PC-9 (cell line): ENCODE measurements at regions of chr19 and their contacts with region 1.

Region 1: GRCh38 chr19:13430790-13431582 is 75.3 kb downstream of the CACNA1A start:
- DNase-seq: peak in 1 of 2 experiments; percentile 35
- H3K4me3 ChIP-seq: no peak overlapping the region
- H3K27ac ChIP-seq: no peak overlapping the region
- H3K4me1 ChIP-seq: no peaks in the 10 kb centered on the region
- H3K27me3 ChIP-seq: no peaks in the 10 kb centered on the region
- CTCF ChIP-seq: peak; percentile 81

Region 2: DNA sequence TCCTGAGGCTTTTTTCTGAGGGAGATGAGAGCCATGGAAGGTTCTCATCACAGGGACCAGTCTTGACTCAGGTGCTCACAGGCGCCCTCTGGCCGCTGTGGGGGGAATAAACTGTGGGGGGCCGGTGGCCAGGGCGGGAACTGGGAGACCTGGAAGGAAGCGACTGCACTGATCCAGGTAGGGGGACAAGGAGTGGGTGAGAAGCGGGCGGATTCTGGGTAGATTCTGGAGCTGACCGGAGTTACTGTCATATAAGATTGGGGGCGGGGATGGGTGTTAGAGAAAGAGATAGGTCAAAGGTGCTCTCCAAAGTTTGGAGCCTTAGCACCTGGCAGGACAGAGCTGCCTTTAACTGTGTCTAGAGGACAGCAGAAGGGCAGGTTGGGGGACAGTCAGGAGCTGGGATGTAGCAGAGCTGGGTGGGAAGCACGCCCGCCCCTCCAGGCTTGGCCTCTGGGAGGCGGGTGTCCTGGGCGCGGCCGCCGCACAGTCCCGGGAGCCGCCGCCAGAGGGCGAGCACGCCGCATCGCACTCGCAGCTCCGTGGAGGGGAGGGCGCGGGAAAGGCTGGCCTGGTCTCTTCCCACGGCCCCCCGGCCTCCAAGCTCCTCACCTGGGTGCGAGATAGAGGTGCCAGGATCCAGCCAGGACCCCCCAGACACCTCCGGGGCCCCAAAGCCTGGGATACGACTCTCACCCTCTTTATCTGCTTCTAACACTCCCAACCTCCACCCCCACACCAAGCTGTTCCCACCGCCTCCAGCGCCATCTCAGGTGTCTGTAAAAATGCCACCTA is 465.8 kb before region 1 on chr19:
- CTCF ChIA-PET with region 1: no interaction called
- POLR2A ChIA-PET with region 1: no interaction called
- intact Hi-C with region 1: no loop called
- DNase-seq: peak; percentile 63 to 86
- H3K4me3 ChIP-seq: peak overlapping the region; percentile 58
- H3K27ac ChIP-seq: no peak overlapping the region
- H3K4me1 ChIP-seq: no peaks in the 10 kb centered on the region; the same call in 1 of the 2 replicates
- H3K27me3 ChIP-seq: no peaks in the 10 kb centered on the region
- CTCF ChIP-seq: peak; percentile 96

Region 3: DNA sequence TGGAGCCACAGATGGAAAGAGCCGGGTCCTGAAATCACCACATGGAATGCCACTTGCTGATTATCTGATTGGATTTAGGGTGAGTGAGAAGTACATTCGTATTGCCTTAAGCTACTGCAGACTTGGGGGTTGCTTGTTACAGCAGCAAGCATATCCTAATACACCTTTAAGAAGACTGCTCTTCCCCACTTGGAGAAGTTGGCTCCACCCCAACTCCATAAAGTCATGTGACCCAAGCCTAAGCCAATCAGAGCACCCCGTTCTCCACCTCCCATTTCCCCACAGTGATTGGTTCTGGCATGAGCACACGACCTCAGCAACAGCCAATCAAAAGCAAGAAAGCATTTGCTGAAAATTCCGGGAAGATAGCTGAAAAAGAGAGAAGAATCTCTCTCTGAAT is 52.2 kb after region 1 on chr19:
- CTCF ChIA-PET with region 1: no interaction called
- POLR2A ChIA-PET with region 1: interaction called, 26 read pairs
- intact Hi-C with region 1: no loop called
- DNase-seq: no peak
- H3K4me3 ChIP-seq: no peak overlapping the region
- H3K27ac ChIP-seq: no peak overlapping the region
- H3K4me1 ChIP-seq: no peaks in the 10 kb centered on the region
- H3K27me3 ChIP-seq: peaks cover 32% of the 10 kb centered on the region; the same call in 1 of the 2 replicates
- CTCF ChIP-seq: no peak